ENCODE measurements at regions of chr6 and their contacts with region 1.

Region 1: DNA sequence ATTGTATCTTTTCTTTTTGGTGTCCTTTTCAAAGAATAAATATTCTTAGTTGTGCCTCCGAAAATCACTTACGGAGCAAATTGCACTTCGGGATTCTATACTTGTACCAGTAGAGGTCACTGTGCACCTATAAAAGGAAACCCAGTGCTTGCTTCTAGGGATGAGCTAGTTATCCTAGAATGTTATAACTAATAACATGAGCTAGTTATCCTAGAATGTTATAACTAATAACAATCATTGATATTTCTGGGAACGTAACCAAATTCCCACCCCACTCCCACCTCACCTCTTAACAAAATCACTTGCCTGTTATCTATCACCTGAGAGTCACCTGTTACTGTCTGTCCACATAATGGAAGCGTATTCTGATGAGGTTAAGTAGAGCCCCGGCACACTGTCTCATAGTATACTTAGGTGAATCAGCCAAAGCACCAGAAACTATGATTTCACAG is 126.9 kb upstream of the TIAM2 start:
- DNase-seq: peak; percentile 76
- ATAC-seq: peak; percentile 83
- H3K4me3 ChIP-seq: no peak overlapping the region
- H3K27ac ChIP-seq: no peak overlapping the region
- H3K4me1 ChIP-seq: no peaks in the 10 kb centered on the region
- H3K27me3 ChIP-seq: no peaks in the 10 kb centered on the region
- CTCF ChIP-seq: peak; percentile 86
- POLR2A ChIP-seq: no peak
- RAD21 ChIP-seq: peak; percentile 84

Region 2: DNA sequence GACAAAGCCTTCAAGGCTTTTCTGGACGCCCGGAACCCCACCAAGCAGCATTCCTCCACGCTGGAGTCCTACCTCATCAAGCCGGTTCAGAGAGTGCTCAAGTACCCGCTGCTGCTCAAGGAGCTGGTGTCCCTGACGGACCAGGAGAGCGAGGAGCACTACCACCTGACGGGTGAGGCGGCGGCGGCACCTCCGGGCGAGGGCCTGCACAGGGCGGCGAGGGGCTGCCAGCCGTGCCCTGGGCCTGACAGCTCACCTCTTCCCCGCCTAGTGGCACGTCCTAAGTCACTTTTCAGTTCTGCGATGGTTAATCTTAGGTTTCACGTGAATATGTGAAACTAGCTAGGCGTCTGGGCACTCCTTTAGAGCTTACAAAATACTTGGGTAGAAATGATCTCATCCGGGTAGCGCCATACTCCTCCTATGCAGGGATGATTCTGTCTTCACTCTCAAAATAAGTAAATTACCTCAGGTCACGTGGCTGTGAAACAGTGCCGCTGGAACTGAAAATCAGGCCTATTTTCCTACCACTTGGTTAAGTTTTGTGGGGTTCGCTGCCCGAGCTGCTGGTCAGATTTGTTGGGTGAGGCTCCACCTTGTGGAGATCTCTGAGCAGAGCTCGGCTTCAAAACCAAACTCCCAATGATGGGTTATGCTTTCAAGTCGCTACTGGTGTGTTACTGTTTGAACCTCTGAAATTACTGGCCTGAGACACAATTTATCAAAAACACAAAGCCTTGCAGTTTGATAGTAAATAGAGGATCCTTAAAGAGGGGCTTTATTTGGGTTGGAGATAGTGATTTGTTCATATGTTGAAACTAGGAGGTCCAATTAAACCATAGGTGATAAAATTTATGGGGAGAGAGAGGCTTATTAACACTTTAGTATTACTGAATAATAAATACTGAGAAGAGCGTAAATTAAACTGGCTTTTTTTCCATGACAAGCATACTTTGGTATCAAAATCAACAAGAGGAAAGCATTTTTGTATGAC is 380.1 kb after region 1 on chr6:
- CTCF ChIA-PET with region 1: no interaction called
- POLR2A ChIA-PET with region 1: no interaction called
- dilution Hi-C with region 1: no loop called
- in situ Hi-C with region 1: no loop called
- intact Hi-C with region 1: loop called (anchors 1 kb)
- DNase-seq: peak; percentile 77
- ATAC-seq: peak; percentile 86
- H3K4me3 ChIP-seq: no peak overlapping the region
- H3K27ac ChIP-seq: no peak overlapping the region
- H3K4me1 ChIP-seq: peaks cover 4% of the 10 kb centered on the region; the same call in 1 of the 2 replicates
- H3K27me3 ChIP-seq: no peaks in the 10 kb centered on the region
- CTCF ChIP-seq: peak; percentile 79
- POLR2A ChIP-seq: no peak
- RAD21 ChIP-seq: peak; percentile 87

Region 3: DNA sequence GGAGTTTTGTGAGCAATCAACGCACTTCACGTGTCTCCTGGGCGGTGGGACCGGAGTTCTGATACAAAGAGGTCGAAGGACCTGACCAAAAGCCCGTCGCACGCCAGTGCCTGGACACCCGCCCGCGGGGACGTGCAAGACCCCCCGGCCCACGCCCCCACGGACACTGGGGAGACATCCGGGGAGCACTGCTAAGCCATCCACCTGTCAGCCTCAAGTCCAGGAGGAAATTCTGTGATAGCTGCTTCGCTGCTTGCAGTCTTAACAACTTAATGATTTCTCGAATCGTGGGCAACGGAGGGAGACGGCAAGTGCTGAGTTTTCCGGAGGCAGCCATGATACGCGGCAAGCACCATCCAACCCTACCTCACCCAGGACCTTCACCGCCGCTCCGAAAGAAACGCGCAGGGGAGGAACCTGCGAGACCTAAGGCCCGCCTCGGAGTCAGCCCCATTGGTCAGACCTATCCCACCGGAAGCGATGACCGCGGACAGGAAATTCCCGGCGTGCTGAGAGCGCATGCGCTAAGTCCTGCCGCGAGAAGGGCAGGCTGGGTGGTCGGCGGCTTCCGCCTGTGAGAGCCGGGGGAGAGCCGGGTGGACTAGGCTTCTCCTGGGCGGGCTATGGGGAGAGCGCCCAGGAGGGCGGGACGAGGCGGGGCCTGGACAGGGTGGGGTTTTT is 446.1 kb after region 1 on chr6 and contains the start of gene TFB1M:
- CTCF ChIA-PET with region 1: interaction called, 3 read pairs
- POLR2A ChIA-PET with region 1: no interaction called
- dilution Hi-C with region 1: no loop called
- in situ Hi-C with region 1: no loop called
- intact Hi-C with region 1: loop called (anchors 5 kb)
- DNase-seq: peak; percentile 98
- ATAC-seq: peak; percentile 97
- H3K4me3 ChIP-seq: peak within 1 kb of the TSS; percentile 84
- H3K27ac ChIP-seq: peak within 1 kb of the TSS; percentile 78
- H3K4me1 ChIP-seq: peaks cover 6% of the 10 kb centered on the region
- H3K27me3 ChIP-seq: no peaks in the 10 kb centered on the region
- CTCF ChIP-seq: no peak
- POLR2A ChIP-seq: peak; percentile 83
- RAD21 ChIP-seq: no peak
- total RNA-seq, gene TFB1M: 22.4 and 28.1 TPM in 2 replicates

Measured in IMR-90 (cell line).